Common myeloid progenitor, CD34-positive (primary cell): ENCODE measurements at regions of chr6 and their contacts with region 1.

Region 1: GRCh38 chr6:83514866-83515466 is 2.6 kb downstream of the PRSS35 start:
- DNase-seq: peak; percentile 64 to 80 (median 71)
- H3K4me3 ChIP-seq: no peak overlapping the region
- H3K27ac ChIP-seq: no peak overlapping the region
- H3K4me1 ChIP-seq: peaks cover 0 to 12% (median 8%) of the 10 kb centered on the region in 4 experiments
- H3K27me3 ChIP-seq: peaks cover 6 to 31% (median 18%) of the 10 kb centered on the region in 5 experiments

Region 2: DNA sequence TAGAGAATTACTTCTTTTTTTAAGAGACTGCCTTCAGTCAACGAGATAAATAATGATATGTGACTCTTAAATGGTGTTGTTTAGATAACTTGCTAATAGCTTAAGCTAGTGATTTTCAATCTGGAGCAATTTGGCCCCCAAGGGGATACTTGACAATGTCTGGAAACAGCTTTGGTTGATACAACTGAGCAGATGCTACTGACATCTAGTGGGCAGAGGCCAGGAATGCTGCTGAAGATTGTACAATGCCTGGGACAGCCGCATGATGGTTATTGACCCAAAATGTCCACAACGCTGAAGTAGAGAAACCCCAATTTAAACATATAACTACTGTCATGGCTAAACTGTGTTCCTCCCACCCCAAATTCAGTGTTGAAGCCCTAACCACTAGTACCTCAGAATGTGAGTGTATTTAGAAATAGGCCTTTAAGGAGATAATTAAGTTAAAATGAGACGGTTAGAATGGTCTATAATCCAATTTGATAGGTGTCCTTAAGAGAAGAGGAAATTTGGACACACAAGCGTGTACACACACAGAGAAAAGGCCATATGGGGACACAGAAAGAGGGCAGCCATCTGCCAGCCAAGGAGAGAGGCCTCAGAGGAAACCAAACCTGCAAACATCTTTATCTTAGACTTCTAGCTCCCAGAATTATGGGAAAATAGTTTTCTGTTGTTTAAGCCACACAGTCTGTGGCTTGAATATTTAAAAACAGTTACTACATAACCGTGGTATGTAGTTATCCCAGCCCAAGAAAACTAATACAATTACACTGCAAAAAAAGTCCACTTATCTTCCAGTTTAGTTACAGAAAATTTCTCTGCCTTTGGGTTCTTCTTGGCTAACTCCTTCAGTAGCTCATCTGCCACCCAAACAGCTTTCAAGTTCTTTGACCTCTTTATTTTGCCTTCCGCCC is 299.6 kb before region 1 on chr6:
- CTCF ChIA-PET with region 1: interaction called, 162 read pairs
- POLR2A ChIA-PET with region 1: no interaction called
- DNase-seq: peak; percentile 71 to 82 (median 80)
- H3K4me3 ChIP-seq: no peak overlapping the region
- H3K27ac ChIP-seq: no peak overlapping the region
- H3K4me1 ChIP-seq: no peaks in the 10 kb centered on the region
- H3K27me3 ChIP-seq: peaks cover 0 to 2% (median 0%) of the 10 kb centered on the region in 5 experiments

Region 3: DNA sequence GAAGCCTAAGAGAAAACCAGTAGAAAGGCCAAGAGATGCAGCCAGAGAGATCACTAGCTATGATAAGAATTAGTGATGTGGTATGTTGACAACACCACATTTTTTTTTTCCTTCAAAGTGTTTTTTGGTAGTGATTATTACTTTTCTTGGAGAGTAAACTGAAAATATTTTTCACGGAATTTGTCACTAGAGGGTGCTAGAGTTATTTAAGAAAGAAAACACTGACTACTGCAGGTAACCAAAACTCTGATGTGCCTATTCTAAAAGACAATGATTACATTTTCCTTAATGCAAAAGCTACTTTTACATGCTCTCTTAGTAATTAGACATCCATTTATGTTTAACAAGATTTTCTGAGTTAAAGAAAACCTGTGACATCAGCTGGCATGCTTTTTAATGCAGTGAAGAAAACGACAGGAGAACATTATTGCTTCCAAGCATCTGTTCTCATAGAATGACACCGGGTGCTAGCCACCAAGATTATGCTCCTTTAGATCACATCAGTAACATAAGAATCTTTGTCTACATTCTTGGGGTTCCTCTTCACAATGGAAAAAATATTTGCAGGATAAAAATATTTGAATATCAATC is 293.0 kb before region 1 on chr6:
- CTCF ChIA-PET with region 1: interaction called, 162 read pairs
- POLR2A ChIA-PET with region 1: no interaction called
- DNase-seq: peak; percentile 42 to 69 (median 62)
- H3K4me3 ChIP-seq: no peak overlapping the region
- H3K27ac ChIP-seq: no peak overlapping the region
- H3K4me1 ChIP-seq: no peaks in the 10 kb centered on the region
- H3K27me3 ChIP-seq: peaks cover 0 to 2% (median 0%) of the 10 kb centered on the region in 5 experiments

Region 4: GRCh38 chr6:83413068-83413467 is 101.9 kb before region 1 on chr6:
- CTCF ChIA-PET with region 1: interaction called, 211 read pairs
- POLR2A ChIA-PET with region 1: interaction called, 3 read pairs
- DNase-seq: no peak
- H3K4me3 ChIP-seq: no peak overlapping the region
- H3K27ac ChIP-seq: no peak overlapping the region
- H3K4me1 ChIP-seq: no peaks in the 10 kb centered on the region
- H3K27me3 ChIP-seq: peaks cover 0 to 2% (median 0%) of the 10 kb centered on the region in 5 experiments

Region 5: GRCh38 chr6:83417880-83418663 is 96.9 kb before region 1 on chr6:
- CTCF ChIA-PET with region 1: interaction called, 211 read pairs
- POLR2A ChIA-PET with region 1: interaction called, 3 read pairs
- DNase-seq: peak; percentile 65 to 80 (median 75)
- H3K4me3 ChIP-seq: no peak overlapping the region
- H3K27ac ChIP-seq: no peak overlapping the region
- H3K4me1 ChIP-seq: peaks cover 0 to 3% (median under 1%) of the 10 kb centered on the region in 4 experiments
- H3K27me3 ChIP-seq: no peaks in the 10 kb centered on the region